Activated CD8-positive, alpha-beta T cell treated with anti-CD3 and anti-CD28 coated beads, Interleukin-2, amount 10 ng/mL, durations not matched to agents 7 days and 5 days (primary cell): ENCODE measurements at regions of chr1 and their contacts with region 1.

Region 1: GRCh38 chr1:66446261-66447001 is 87.5 kb upstream of the SGIP1 start:
- DNase-seq: peak; percentile 67
- ATAC-seq: peak; percentile 66
- H3K4me3 Mint-ChIP-seq: peak overlapping the region; percentile 76
- H3K27ac Mint-ChIP-seq: peak overlapping the region; percentile 96
- H3K4me1 Mint-ChIP-seq: peaks cover 25% of the 10 kb centered on the region
- H3K27me3 Mint-ChIP-seq: peaks cover 11% of the 10 kb centered on the region

Region 2: GRCh38 chr1:65939636-65940035 is 506.8 kb before region 1 on chr1:
- CTCF ChIA-PET with region 1: no interaction called
- POLR2A ChIA-PET with region 1: no interaction called
- DNase-seq: no peak
- ATAC-seq: no peak
- H3K4me3 Mint-ChIP-seq: no peak overlapping the region
- H3K27ac Mint-ChIP-seq: no peak overlapping the region
- H3K4me1 Mint-ChIP-seq: no peaks in the 10 kb centered on the region
- H3K27me3 Mint-ChIP-seq: peaks cover 20% of the 10 kb centered on the region

Region 3: DNA sequence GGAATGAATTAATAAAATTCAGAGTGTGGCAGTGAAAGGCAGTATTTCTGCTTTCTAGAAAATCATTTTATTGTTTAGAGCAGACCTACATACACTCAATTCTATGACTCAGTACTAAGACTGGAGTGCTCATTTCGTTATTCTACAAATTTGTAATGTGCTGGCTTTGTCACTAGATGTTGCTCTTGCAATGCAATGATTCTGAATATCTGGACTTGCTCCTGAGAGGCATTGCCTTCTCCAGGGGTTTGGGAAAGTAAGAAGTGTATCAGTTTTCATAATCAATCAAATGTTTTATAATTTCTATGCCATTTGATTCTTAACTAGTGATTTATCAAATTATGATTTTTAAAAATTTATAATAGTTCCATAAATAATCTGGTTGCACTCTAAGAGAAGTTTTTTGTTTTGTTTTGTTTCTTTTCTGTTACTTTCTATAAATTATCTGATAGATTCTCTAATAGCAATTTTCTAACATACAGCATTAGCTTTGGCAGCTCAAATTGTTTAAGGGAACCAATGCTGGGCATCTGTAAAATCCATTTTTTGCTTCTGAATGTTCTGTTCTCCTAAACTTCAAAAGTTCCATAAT is 193.0 kb before region 1 on chr1:
- CTCF ChIA-PET with region 1: interaction called, 703 read pairs
- POLR2A ChIA-PET with region 1: interaction called, 13 read pairs
- DNase-seq: peak; percentile 46
- ATAC-seq: peak; percentile 83
- H3K4me3 Mint-ChIP-seq: no peak overlapping the region
- H3K27ac Mint-ChIP-seq: no peak overlapping the region
- H3K4me1 Mint-ChIP-seq: peaks cover 37% of the 10 kb centered on the region
- H3K27me3 Mint-ChIP-seq: no peaks in the 10 kb centered on the region

Region 4: GRCh38 chr1:66282343-66282852 is 164.0 kb before region 1 on chr1:
- CTCF ChIA-PET with region 1: interaction called, 39 read pairs
- POLR2A ChIA-PET with region 1: interaction called, 4 read pairs
- DNase-seq: peak; percentile 72
- ATAC-seq: peak; percentile 91
- H3K4me3 Mint-ChIP-seq: no peak overlapping the region
- H3K27ac Mint-ChIP-seq: peak overlapping the region; percentile 66
- H3K4me1 Mint-ChIP-seq: peaks cover 91% of the 10 kb centered on the region
- H3K27me3 Mint-ChIP-seq: no peaks in the 10 kb centered on the region

Region 5: DNA sequence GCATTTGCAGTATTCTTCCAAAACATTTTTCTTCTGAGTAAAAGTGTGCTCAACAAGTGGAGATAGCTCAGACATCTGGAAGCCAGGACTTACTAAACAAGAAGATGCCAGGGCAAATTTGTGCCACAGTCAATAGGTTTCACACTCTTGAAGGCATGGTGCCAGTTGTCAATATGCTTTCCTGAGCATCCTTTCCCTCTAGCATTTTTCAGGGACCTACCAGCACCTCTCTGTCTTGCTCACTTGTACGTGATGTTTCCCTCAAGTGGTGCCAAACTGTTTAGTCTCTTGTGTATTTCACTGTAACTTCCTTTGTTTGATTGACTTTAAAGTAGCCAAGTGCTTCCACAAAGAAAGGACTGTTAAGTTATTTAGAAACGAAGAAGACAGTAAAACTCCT is 106.5 kb before region 1 on chr1:
- CTCF ChIA-PET with region 1: interaction called, 92 read pairs
- POLR2A ChIA-PET with region 1: interaction called, 7 read pairs
- DNase-seq: no peak
- ATAC-seq: no peak
- H3K4me3 Mint-ChIP-seq: peak overlapping the region; percentile 61
- H3K27ac Mint-ChIP-seq: peak overlapping the region; percentile 79
- H3K4me1 Mint-ChIP-seq: peaks cover 80% of the 10 kb centered on the region
- H3K27me3 Mint-ChIP-seq: no peaks in the 10 kb centered on the region

Region 6: GRCh38 chr1:66380452-66381212 is 65.8 kb before region 1 on chr1:
- CTCF ChIA-PET with region 1: interaction called, 33 read pairs
- POLR2A ChIA-PET with region 1: interaction called, 4 read pairs
- DNase-seq: no peak
- ATAC-seq: no peak
- H3K4me3 Mint-ChIP-seq: no peak overlapping the region
- H3K27ac Mint-ChIP-seq: no peak overlapping the region
- H3K4me1 Mint-ChIP-seq: peaks cover 4% of the 10 kb centered on the region
- H3K27me3 Mint-ChIP-seq: no peaks in the 10 kb centered on the region

Region 7: DNA sequence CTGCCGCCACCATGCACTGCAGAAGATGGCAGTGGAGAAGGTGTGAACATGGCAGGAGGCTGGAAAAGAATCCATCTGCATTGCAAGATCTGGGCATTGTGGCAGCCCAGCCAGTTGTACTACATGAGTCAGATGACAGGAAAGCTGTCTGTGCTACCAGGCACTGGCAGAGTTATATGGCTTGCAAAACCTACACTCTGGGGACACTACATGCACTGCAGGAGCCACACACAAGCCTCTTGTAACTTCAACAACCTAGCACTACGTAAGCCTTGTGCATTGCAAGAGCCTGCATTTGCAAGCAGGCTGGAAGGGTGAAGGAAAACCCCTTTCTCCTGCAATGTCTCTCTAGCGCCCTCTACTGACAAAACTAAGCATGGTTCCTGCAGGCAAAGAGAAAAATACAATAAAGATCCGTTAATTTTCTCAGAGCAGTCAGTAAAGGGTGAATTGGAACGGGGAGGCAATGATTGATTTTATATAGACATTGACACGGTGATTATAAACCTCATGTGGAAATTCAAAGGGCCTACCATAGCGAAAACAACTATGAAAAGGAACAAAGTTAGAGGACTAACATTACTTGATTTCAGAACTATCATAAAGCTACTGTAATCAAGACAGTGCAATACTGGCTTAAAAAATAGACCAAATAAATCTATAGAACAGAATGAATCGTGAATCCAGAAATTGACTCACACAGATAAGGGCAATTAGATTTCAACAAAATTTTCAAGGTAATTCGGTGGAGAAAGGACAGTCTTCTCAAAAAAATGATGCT is 279.6 kb after region 1 on chr1:
- CTCF ChIA-PET with region 1: interaction called, 10 read pairs
- POLR2A ChIA-PET with region 1: no interaction called
- DNase-seq: peak; percentile 68
- ATAC-seq: peak; percentile 75
- H3K4me3 Mint-ChIP-seq: no peak overlapping the region
- H3K27ac Mint-ChIP-seq: no peak overlapping the region
- H3K4me1 Mint-ChIP-seq: peaks cover 14% of the 10 kb centered on the region
- H3K27me3 Mint-ChIP-seq: peaks cover 17% of the 10 kb centered on the region